PC-3 (cell line): ENCODE measurements at regions of chr14 and their contacts with region 1.

Region 1: GRCh38 chr14:60980811-60981632 is at the starts of genes SLC38A6 and TRMT5:
- DNase-seq: peak; percentile 99
- ATAC-seq: peak; percentile 92
- H3K4me3 ChIP-seq: peak within 1 kb of the TSS; percentile 93
- H3K27ac ChIP-seq: peak within 1 kb of the TSS; percentile 71
- H3K4me1 ChIP-seq: peaks cover 57% of the 10 kb centered on the region
- H3K27me3 ChIP-seq: no peaks in the 10 kb centered on the region
- CTCF ChIP-seq: no peak
- total RNA-seq, gene SLC38A6: 24.8 and 28.0 TPM in 2 replicates
- total RNA-seq, gene TRMT5: 12.8 and 15.8 TPM in 2 replicates

Region 2: GRCh38 chr14:59964251-59965007 is 1016.6 kb before region 1 on chr14:
- CTCF ChIA-PET with region 1: no interaction called
- POLR2A ChIA-PET with region 1: interaction called, 13 read pairs
- intact Hi-C with region 1: no loop called
- DNase-seq: peak; percentile 70
- ATAC-seq: peak; percentile 66
- H3K4me3 ChIP-seq: no peak overlapping the region
- H3K27ac ChIP-seq: no peak overlapping the region
- H3K4me1 ChIP-seq: peaks cover 18% of the 10 kb centered on the region
- H3K27me3 ChIP-seq: peaks cover 23% of the 10 kb centered on the region
- CTCF ChIP-seq: no peak

Region 3: GRCh38 chr14:60648934-60649874 is 331.8 kb before region 1 on chr14 and contains the start of gene SIX1:
- CTCF ChIA-PET with region 1: interaction called, 3 read pairs
- POLR2A ChIA-PET with region 1: interaction called, 4 read pairs
- intact Hi-C with region 1: loop called (anchors 2 kb)
- DNase-seq: peak; percentile 97
- ATAC-seq: peak; percentile 78
- H3K4me3 ChIP-seq: peak within 1 kb of the TSS; percentile 75
- H3K27ac ChIP-seq: 0 out of 2 replicates have a peak within 1 kb of the TSS, but pooled peaks have one; percentile 6
- H3K4me1 ChIP-seq: peaks cover 21% of the 10 kb centered on the region
- H3K27me3 ChIP-seq: no peaks in the 10 kb centered on the region
- CTCF ChIP-seq: no peak
- total RNA-seq, gene SIX1: 16.5 and 18.2 TPM in 2 replicates

Region 4: DNA sequence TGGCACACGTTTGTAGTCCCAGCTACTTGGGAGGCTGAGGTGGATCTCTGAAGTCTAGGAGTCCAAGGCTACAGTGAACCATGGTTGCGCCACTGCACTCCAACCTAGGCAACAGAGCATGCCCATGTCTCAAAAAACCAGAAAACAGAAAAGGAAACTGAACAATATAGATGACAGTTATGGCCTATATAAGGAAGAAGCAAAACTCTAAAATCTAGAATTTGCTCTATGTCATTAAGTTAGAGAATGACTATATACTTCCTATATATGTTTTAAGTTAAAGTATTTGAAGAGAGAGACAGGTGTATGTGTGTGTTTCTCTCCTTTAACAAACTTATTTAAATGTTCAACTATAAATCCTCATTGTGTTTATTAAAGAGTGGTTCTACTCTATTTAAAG is 180.6 kb before region 1 on chr14:
- CTCF ChIA-PET with region 1: no interaction called
- POLR2A ChIA-PET with region 1: no interaction called
- intact Hi-C with region 1: no loop called
- DNase-seq: no peak
- ATAC-seq: no peak
- H3K4me3 ChIP-seq: no peak overlapping the region
- H3K27ac ChIP-seq: no peak overlapping the region
- H3K4me1 ChIP-seq: peaks cover 3% of the 10 kb centered on the region; the same call in 1 of the 2 replicates
- H3K27me3 ChIP-seq: no peaks in the 10 kb centered on the region
- CTCF ChIP-seq: no peak

Region 5: GRCh38 chr14:60965402-60965801 is 15.6 kb before region 1 on chr14:
- CTCF ChIA-PET with region 1: no interaction called
- POLR2A ChIA-PET with region 1: interaction called, 5 read pairs
- intact Hi-C with region 1: loop called (anchors 1 kb)
- DNase-seq: peak; percentile 66
- ATAC-seq: peak; percentile 92
- H3K4me3 ChIP-seq: no peak overlapping the region
- H3K27ac ChIP-seq: peak overlapping the region; percentile 27
- H3K4me1 ChIP-seq: peaks cover 5% of the 10 kb centered on the region; the same call in 1 of the 2 replicates
- H3K27me3 ChIP-seq: no peaks in the 10 kb centered on the region
- CTCF ChIP-seq: no peak

Region 6: GRCh38 chr14:61121355-61121787 is 140.3 kb after region 1 on chr14:
- CTCF ChIA-PET with region 1: no interaction called
- POLR2A ChIA-PET with region 1: no interaction called
- intact Hi-C with region 1: no loop called
- DNase-seq: no peak
- ATAC-seq: no peak
- H3K4me3 ChIP-seq: no peak overlapping the region
- H3K27ac ChIP-seq: no peak overlapping the region
- H3K4me1 ChIP-seq: peaks cover 3% of the 10 kb centered on the region; the same call in 1 of the 2 replicates
- H3K27me3 ChIP-seq: no peaks in the 10 kb centered on the region
- CTCF ChIP-seq: no peak

Region 7: GRCh38 chr14:61188978-61189808 is 208.2 kb after region 1 on chr14:
- CTCF ChIA-PET with region 1: no interaction called
- POLR2A ChIA-PET with region 1: interaction called, 4 read pairs
- intact Hi-C with region 1: loop called (anchors 1 kb)
- DNase-seq: peak; percentile 84
- ATAC-seq: peak; percentile 91
- H3K4me3 ChIP-seq: peak overlapping the region; percentile 65
- H3K27ac ChIP-seq: no peak overlapping the region
- H3K4me1 ChIP-seq: peaks cover 16% of the 10 kb centered on the region
- H3K27me3 ChIP-seq: no peaks in the 10 kb centered on the region
- CTCF ChIP-seq: peak; percentile 90

Region 8: DNA sequence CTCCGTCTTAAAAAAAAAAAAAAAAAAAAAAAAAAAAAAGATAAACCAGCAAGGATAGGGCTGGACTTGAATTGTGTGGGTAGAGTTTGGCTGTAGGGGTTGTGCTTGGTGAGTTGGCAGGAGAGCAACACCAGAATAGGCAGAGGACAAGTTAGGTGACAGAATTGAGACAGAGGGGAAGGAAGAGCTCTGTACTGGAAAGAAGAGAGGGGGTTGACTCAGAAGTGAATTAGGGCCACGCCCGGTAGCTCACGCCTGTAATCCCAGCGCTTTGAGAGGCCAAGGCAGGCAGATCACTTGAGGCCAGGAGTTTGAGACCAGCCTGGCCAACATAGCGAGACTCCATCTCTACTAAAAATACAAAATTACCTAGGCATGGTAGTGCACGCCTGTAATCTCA is 306.2 kb after region 1 on chr14:
- CTCF ChIA-PET with region 1: no interaction called
- POLR2A ChIA-PET with region 1: interaction called, 16 read pairs
- intact Hi-C with region 1: no loop called
- DNase-seq: peak; percentile 40
- ATAC-seq: no peak
- H3K4me3 ChIP-seq: no peak overlapping the region
- H3K27ac ChIP-seq: no peak overlapping the region
- H3K4me1 ChIP-seq: peaks cover 45% of the 10 kb centered on the region
- H3K27me3 ChIP-seq: no peaks in the 10 kb centered on the region
- CTCF ChIP-seq: no peak